ENCODE measurements at regions of chr12 and their contacts with region 1.

Region 1: GRCh38 chr12:12376646-12377448 is 20.0 kb downstream of the BORCS5 start:
- DNase-seq: peak in 7 of 9 donors; percentile 58 to 84 (median 72)
- ATAC-seq: peak; percentile 63
- H3K4me3 ChIP-seq: no peak overlapping the region
- H3K4me3 Mint-ChIP-seq: no peak overlapping the region
- H3K27ac ChIP-seq: no peak overlapping the region
- H3K27ac Mint-ChIP-seq: peak overlapping the region in 6 of 9 donors; percentile 46 to 86 (median 66)
- H3K4me1 ChIP-seq: peaks cover 14 to 42% of the 10 kb centered on the region in 2 donors
- H3K4me1 Mint-ChIP-seq: peaks cover 7 to 50% (median 44%) of the 10 kb centered on the region in 7 donors
- H3K27me3 ChIP-seq: no peaks in the 10 kb centered on the region
- H3K27me3 Mint-ChIP-seq: no peaks in the 10 kb centered on the region

Region 2: GRCh38 chr12:12356886-12357718 is 19.7 kb before region 1 on chr12 and contains the start of gene BORCS5:
- CTCF ChIA-PET with region 1: interaction called, 7 read pairs
- POLR2A ChIA-PET with region 1: interaction called, 4 read pairs
- intact Hi-C with region 1: loop called in 1 of 2 experiments (anchors 1 kb)
- DNase-seq: peak; percentile 94 to 99 (median 97)
- ATAC-seq: peak; percentile 96
- H3K4me3 ChIP-seq: peak within 1 kb of the TSS; percentile 85
- H3K4me3 Mint-ChIP-seq: peak within 1 kb of the TSS; percentile 90 to 99 (median 96)
- H3K27ac ChIP-seq: peak within 1 kb of the TSS; percentile 99
- H3K27ac Mint-ChIP-seq: peak within 1 kb of the TSS; percentile 92 to 99 (median 98)
- H3K4me1 ChIP-seq: peaks cover 14 to 28% of the 10 kb centered on the region in 2 donors
- H3K4me1 Mint-ChIP-seq: peaks cover 31 to 74% (median 64%) of the 10 kb centered on the region in 7 donors
- H3K27me3 ChIP-seq: no peaks in the 10 kb centered on the region
- H3K27me3 Mint-ChIP-seq: no peaks in the 10 kb centered on the region
- total RNA-seq, gene BORCS5: 15.3 to 28.2 (median 22.1) TPM

Region 3: GRCh38 chr12:12486661-12487240 is 109.9 kb after region 1 on chr12:
- CTCF ChIA-PET with region 1: interaction called, 3 read pairs
- POLR2A ChIA-PET with region 1: interaction called, 6 read pairs
- intact Hi-C with region 1: loop called (anchors 1 kb)
- DNase-seq: no peak
- ATAC-seq: no peak
- H3K4me3 ChIP-seq: no peak overlapping the region
- H3K4me3 Mint-ChIP-seq: no peak overlapping the region
- H3K27ac ChIP-seq: no peak overlapping the region
- H3K27ac Mint-ChIP-seq: peak overlapping the region in 6 of 9 donors; percentile 48 to 83 (median 68)
- H3K4me1 ChIP-seq: peaks cover 15 to 16% of the 10 kb centered on the region in 2 donors
- H3K4me1 Mint-ChIP-seq: peaks cover 12 to 43% (median 37%) of the 10 kb centered on the region in 7 donors
- H3K27me3 ChIP-seq: no peaks in the 10 kb centered on the region
- H3K27me3 Mint-ChIP-seq: no peaks in the 10 kb centered on the region

Region 4: GRCh38 chr12:12622418-12622817 is 245.6 kb after region 1 on chr12:
- CTCF ChIA-PET with region 1: interaction called, 4 read pairs
- POLR2A ChIA-PET with region 1: no interaction called
- intact Hi-C with region 1: loop called in 1 of 2 experiments (anchors 1 kb)
- DNase-seq: peak in 7 of 9 donors; percentile 44 to 76 (median 65)
- ATAC-seq: peak; percentile 87
- H3K4me3 ChIP-seq: peak overlapping the region; percentile 29
- H3K4me3 Mint-ChIP-seq: peak overlapping the region; percentile 1 to 79 (median 62)
- H3K27ac ChIP-seq: peak overlapping the region; percentile 72
- H3K27ac Mint-ChIP-seq: peak overlapping the region; percentile 70 to 95 (median 86)
- H3K4me1 ChIP-seq: peaks cover 27 to 40% of the 10 kb centered on the region in 2 donors
- H3K4me1 Mint-ChIP-seq: peaks cover 34 to 91% (median 83%) of the 10 kb centered on the region in 7 donors
- H3K27me3 ChIP-seq: no peaks in the 10 kb centered on the region
- H3K27me3 Mint-ChIP-seq: no peaks in the 10 kb centered on the region

Region 5: GRCh38 chr12:12696562-12697383 is 319.9 kb after region 1 on chr12:
- CTCF ChIA-PET with region 1: interaction called, 6 read pairs
- POLR2A ChIA-PET with region 1: interaction called, 7 read pairs
- intact Hi-C with region 1: loop called (anchors 2 kb)
- DNase-seq: peak; percentile 86 to 97 (median 92)
- ATAC-seq: peak; percentile 92
- H3K4me3 ChIP-seq: peak overlapping the region; percentile 63
- H3K4me3 Mint-ChIP-seq: peak overlapping the region; percentile 79 to 99 (median 95)
- H3K27ac ChIP-seq: peak overlapping the region; percentile 93
- H3K27ac Mint-ChIP-seq: peak overlapping the region; percentile 95 to 100 (median 100)
- H3K4me1 ChIP-seq: peaks cover 11 to 16% of the 10 kb centered on the region in 2 donors
- H3K4me1 Mint-ChIP-seq: peaks cover 24 to 63% (median 33%) of the 10 kb centered on the region in 7 donors
- H3K27me3 ChIP-seq: no peaks in the 10 kb centered on the region
- H3K27me3 Mint-ChIP-seq: no peaks in the 10 kb centered on the region

Region 6: DNA sequence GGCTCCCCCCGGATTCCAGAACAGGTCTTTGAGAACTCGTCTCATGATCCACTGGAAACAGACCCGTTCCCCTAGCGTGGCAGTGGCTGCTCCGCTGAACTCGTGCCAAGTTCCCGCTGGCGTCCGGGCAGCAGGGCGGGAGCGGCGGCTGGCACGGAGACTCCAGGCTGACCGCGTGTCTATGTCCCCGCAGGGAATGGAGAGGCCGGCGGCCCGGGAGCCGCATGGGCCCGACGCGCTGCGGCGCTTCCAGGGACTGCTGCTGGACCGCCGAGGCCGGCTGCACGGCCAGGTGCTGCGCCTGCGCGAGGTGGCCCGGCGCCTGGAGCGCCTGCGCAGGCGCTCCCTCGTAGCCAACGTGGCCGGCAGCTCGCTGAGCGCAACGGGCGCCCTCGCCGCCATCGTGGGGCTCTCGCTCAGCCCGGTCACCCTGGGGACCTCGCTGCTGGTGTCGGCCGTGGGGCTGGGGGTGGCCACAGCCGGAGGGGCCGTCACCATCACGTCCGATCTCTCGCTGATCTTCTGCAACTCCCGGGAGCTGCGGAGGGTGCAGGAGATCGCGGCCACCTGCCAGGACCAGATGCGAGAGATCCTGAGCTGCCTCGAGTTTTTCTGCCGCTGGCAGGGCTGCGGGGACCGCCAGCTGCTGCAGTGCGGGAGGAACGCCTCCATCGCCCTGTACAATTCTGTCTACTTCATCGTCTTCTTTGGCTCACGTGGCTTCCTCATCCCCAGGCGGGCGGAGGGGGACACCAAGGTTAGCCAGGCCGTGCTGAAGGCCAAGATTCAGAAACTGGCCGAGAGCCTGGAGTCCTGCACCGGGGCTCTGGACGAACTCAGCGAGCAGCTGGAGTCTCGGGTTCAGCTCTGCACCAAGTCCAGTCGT is 410.1 kb after region 1 on chr12:
- CTCF ChIA-PET with region 1: interaction called, 5 read pairs
- POLR2A ChIA-PET with region 1: no interaction called
- intact Hi-C with region 1: loop called (anchors 1 to 5 kb)
- DNase-seq: peak; percentile 62 to 78 (median 72)
- ATAC-seq: peak; percentile 92
- H3K4me3 ChIP-seq: peak overlapping the region; percentile 86
- H3K4me3 Mint-ChIP-seq: peak overlapping the region; percentile 76 to 89 (median 85)
- H3K27ac ChIP-seq: peak overlapping the region; percentile 78
- H3K27ac Mint-ChIP-seq: peak overlapping the region; percentile 62 to 96 (median 88)
- H3K4me1 ChIP-seq: peaks cover 6 to 9% of the 10 kb centered on the region in 2 donors
- H3K4me1 Mint-ChIP-seq: peaks cover 6 to 35% (median 17%) of the 10 kb centered on the region in 7 donors
- H3K27me3 ChIP-seq: no peaks in the 10 kb centered on the region
- H3K27me3 Mint-ChIP-seq: no peaks in the 10 kb centered on the region

Measured in naive thymus-derived CD4-positive, alpha-beta T cell (primary cell).